Natural killer cell (primary cell): ENCODE measurements at regions of chr1 and their contacts with region 1.

Region 1: GRCh38 chr1:208093754-208094719 is 150.1 kb downstream of the PLXNA2 start:
- DNase-seq: peak; percentile 26 to 70
- ATAC-seq: peak in 2 of 3 donors; percentile 50 to 64
- H3K4me3 ChIP-seq: no peak overlapping the region
- H3K4me3 Mint-ChIP-seq: no peak overlapping the region
- H3K27ac ChIP-seq: no peak overlapping the region
- H3K27ac Mint-ChIP-seq: no peak overlapping the region
- H3K4me1 ChIP-seq: no peaks in the 10 kb centered on the region
- H3K4me1 Mint-ChIP-seq: no peaks in the 10 kb centered on the region
- H3K27me3 ChIP-seq: no peaks in the 10 kb centered on the region
- H3K27me3 Mint-ChIP-seq: no peaks in the 10 kb centered on the region
- CTCF ChIP-seq: peak; percentile 61

Region 2: GRCh38 chr1:207973898-207974568 is 120.0 kb before region 1 on chr1:
- intact Hi-C with region 1: no loop called
- DNase-seq: no peak
- ATAC-seq: no peak
- H3K4me3 ChIP-seq: no peak overlapping the region
- H3K4me3 Mint-ChIP-seq: no peak overlapping the region
- H3K27ac ChIP-seq: no peak overlapping the region
- H3K27ac Mint-ChIP-seq: no peak overlapping the region
- H3K4me1 ChIP-seq: no peaks in the 10 kb centered on the region
- H3K4me1 Mint-ChIP-seq: no peaks in the 10 kb centered on the region
- H3K27me3 ChIP-seq: no peaks in the 10 kb centered on the region
- H3K27me3 Mint-ChIP-seq: peaks cover 24 to 52% of the 10 kb centered on the region in 2 donors
- CTCF ChIP-seq: no peak

Region 3: DNA sequence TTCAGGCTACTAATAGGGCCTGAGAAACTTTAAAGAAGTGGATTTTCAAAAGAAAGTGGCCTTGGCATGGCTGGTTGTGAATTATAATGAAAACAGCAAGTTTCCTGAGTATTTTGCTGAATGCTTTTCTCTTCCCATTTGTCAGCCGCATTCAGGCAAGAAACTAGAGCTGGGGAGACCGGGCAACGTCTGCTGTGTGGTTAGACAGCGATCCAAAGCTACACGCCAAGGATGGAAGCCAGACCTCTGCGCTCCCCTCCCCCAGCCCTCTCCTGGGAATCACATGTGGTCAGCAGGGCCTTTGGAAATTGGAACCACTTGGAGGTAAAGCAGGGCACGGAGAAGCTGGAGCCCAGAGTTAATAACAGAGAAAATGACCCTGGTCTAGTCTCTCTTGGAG is 69.0 kb before region 1 on chr1:
- intact Hi-C with region 1: loop called (anchors 5 kb)
- DNase-seq: no peak
- ATAC-seq: no peak
- H3K4me3 ChIP-seq: no peak overlapping the region
- H3K4me3 Mint-ChIP-seq: no peak overlapping the region
- H3K27ac ChIP-seq: no peak overlapping the region
- H3K27ac Mint-ChIP-seq: no peak overlapping the region
- H3K4me1 ChIP-seq: no peaks in the 10 kb centered on the region
- H3K4me1 Mint-ChIP-seq: no peaks in the 10 kb centered on the region
- H3K27me3 ChIP-seq: no peaks in the 10 kb centered on the region
- H3K27me3 Mint-ChIP-seq: peaks cover 0 to 2% of the 10 kb centered on the region in 2 donors
- CTCF ChIP-seq: no peak

Region 4: GRCh38 chr1:208455821-208456220 is 361.8 kb after region 1 on chr1:
- intact Hi-C with region 1: no loop called
- DNase-seq: no peak
- ATAC-seq: no peak
- H3K4me3 ChIP-seq: no peak overlapping the region
- H3K4me3 Mint-ChIP-seq: no peak overlapping the region
- H3K27ac ChIP-seq: no peak overlapping the region
- H3K27ac Mint-ChIP-seq: no peak overlapping the region
- H3K4me1 ChIP-seq: no peaks in the 10 kb centered on the region
- H3K4me1 Mint-ChIP-seq: no peaks in the 10 kb centered on the region
- H3K27me3 ChIP-seq: no peaks in the 10 kb centered on the region
- H3K27me3 Mint-ChIP-seq: no peaks in the 10 kb centered on the region
- CTCF ChIP-seq: no peak